GM10248 (cell line): ENCODE measurements at regions of chr6 and their contacts with region 1.

Region 1: GRCh38 chr6:79813854-79814709 is 133.3 kb downstream of the ELOVL4 start:
- DNase-seq: peak; percentile 47
- CTCF ChIP-seq: peak; percentile 88

Region 2: GRCh38 chr6:79796197-79796596 is 17.9 kb before region 1 on chr6:
- CTCF ChIA-PET with region 1: interaction called, 14 read pairs
- POLR2A ChIA-PET with region 1: no interaction called
- DNase-seq: no peak
- CTCF ChIP-seq: no peak

Region 3: DNA sequence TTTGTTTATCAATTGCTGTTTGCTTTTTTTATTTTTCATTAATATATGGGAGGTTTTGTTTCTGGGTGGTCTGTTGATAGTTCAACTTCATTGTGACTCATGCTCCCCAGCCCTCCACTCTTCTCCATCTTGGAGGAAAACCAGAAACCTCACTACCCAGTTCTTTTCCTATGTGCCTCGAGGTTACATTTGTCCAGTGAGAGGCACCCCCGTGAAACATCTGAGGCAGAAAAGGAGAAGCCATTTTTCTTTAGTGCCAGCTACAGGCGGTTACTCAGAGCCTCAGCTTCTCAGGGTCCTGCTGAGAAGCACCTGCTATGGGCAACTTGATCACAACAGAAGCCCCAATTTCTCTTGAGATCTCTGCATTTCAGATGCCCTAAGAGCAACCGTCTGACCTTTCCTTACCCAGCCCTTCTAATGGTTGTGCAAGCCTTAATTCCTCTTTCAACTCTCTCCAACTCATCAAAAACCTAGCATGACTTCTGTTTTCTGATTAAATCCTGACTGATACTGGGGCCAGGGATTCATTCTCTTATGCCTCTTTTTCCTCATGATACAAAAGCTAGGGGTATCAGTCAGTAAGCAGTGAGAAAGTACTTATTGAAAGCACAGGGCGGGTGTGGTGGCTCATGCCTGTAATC is 11.3 kb before region 1 on chr6:
- CTCF ChIA-PET with region 1: interaction called, 14 read pairs
- POLR2A ChIA-PET with region 1: no interaction called
- DNase-seq: no peak
- CTCF ChIP-seq: no peak

Region 4: DNA sequence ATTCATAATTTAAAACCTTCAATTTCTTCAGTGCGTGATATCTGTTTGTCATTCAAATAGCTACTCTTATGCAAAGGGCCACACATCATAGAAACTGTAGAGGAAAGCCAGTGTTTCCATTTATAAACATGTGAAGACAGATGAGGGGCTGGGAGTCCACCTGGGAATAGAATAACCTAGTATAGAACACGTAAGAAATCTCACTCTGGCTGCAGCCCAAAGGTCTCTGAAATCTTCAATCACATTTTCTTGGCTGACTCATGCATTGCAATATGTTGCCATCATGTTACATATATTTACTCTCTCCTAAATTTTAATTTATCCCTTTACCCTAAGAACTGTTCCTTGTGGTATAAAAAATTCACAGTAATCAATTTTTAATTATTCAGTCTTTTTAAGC is 10.1 kb after region 1 on chr6:
- CTCF ChIA-PET with region 1: interaction called, 17 read pairs
- POLR2A ChIA-PET with region 1: no interaction called
- DNase-seq: no peak
- CTCF ChIP-seq: no peak